Natural killer cell (primary cell): ENCODE measurements at regions of chr6 and their contacts with region 1.

Region 1: DNA sequence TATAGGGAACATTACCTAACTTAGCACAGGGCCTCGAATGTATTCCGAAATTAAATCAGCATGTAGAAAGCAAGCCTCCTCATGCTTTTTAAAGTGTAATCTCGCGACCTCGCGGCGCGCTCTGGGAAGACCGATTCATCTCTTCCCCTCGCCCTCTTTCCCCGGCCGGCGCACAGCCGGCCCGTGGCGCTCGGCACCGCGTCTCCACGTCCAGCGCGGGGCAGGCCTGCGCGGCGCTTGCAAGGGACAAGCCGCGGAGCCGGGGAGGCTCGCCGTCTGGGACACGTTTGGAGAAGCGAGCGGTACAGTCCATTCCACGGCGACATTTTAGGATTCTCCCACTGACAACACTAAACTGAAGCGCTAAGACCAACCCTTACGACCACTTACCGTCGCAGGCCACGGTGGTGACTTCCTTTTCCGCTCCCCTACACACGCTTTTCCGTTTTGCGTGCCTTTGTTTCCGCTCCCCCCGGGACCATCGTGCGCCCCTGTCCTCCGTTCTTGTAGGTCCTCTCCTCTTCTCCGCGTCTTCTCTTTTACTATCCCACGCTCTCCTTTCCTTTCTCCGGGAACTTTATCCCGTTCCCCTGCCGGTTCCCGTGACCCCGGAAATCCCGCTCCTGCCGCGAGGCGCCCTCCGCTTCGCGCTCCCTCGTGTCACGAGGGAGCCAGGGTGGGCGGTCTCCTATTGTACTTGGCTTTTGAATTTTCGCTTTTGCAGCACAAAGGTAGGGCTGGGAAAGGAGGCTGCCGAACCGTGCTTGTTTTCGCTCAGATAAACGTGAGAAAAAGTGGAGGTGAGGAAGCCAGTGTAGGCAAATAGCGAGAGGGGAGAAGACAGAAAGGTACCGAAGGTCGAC is at the start of gene ECHDC1:
- DNase-seq: peak; percentile 58 to 83
- ATAC-seq: peak; percentile 85 to 87 (median 87)
- H3K4me3 ChIP-seq: peak within 1 kb of the TSS; percentile 85
- H3K4me3 Mint-ChIP-seq: no peak within 1 kb of the TSS
- H3K27ac ChIP-seq: peak within 1 kb of the TSS; percentile 74
- H3K27ac Mint-ChIP-seq: no peak within 1 kb of the TSS
- H3K4me1 ChIP-seq: peaks cover 8% of the 10 kb centered on the region
- H3K4me1 Mint-ChIP-seq: peaks cover 5 to 12% of the 10 kb centered on the region in 2 donors
- H3K27me3 ChIP-seq: no peaks in the 10 kb centered on the region
- H3K27me3 Mint-ChIP-seq: no peaks in the 10 kb centered on the region
- CTCF ChIP-seq: no peak
- total RNA-seq, gene ECHDC1: 18.7 to 35.1 (median 21.4) TPM

Region 2: GRCh38 chr6:127266178-127266891 is 76.8 kb before region 1 on chr6 and contains the start of gene RNF146:
- intact Hi-C with region 1: loop called (anchors 1 kb)
- DNase-seq: peak; percentile 78 to 85
- ATAC-seq: peak; percentile 75 to 88 (median 83)
- H3K4me3 ChIP-seq: peak within 1 kb of the TSS; percentile 95
- H3K4me3 Mint-ChIP-seq: peak within 1 kb of the TSS; percentile 99
- H3K27ac ChIP-seq: peak within 1 kb of the TSS; percentile 98
- H3K27ac Mint-ChIP-seq: peak within 1 kb of the TSS; percentile 96
- H3K4me1 ChIP-seq: no peaks in the 10 kb centered on the region
- H3K4me1 Mint-ChIP-seq: peaks cover 34 to 42% of the 10 kb centered on the region in 2 donors
- H3K27me3 ChIP-seq: no peaks in the 10 kb centered on the region
- H3K27me3 Mint-ChIP-seq: peaks cover 0 to 4% of the 10 kb centered on the region in 2 donors
- CTCF ChIP-seq: peak; percentile 69
- total RNA-seq, gene RNF146: 23.0 to 34.8 (median 25.4) TPM